ENCODE measurements at regions of chr1 and their contacts with region 1.

Region 1: GRCh38 chr1:203216274-203217138 is 13.0 kb downstream of the CHIT1 start:
- DNase-seq: peak; percentile 77
- CTCF ChIP-seq: peak; percentile 83

Region 2: GRCh38 chr1:203065191-203065590 is 151.3 kb before region 1 on chr1:
- CTCF ChIA-PET with region 1: interaction called, 11 read pairs
- POLR2A ChIA-PET with region 1: no interaction called
- DNase-seq: no peak
- CTCF ChIP-seq: no peak

Region 3: DNA sequence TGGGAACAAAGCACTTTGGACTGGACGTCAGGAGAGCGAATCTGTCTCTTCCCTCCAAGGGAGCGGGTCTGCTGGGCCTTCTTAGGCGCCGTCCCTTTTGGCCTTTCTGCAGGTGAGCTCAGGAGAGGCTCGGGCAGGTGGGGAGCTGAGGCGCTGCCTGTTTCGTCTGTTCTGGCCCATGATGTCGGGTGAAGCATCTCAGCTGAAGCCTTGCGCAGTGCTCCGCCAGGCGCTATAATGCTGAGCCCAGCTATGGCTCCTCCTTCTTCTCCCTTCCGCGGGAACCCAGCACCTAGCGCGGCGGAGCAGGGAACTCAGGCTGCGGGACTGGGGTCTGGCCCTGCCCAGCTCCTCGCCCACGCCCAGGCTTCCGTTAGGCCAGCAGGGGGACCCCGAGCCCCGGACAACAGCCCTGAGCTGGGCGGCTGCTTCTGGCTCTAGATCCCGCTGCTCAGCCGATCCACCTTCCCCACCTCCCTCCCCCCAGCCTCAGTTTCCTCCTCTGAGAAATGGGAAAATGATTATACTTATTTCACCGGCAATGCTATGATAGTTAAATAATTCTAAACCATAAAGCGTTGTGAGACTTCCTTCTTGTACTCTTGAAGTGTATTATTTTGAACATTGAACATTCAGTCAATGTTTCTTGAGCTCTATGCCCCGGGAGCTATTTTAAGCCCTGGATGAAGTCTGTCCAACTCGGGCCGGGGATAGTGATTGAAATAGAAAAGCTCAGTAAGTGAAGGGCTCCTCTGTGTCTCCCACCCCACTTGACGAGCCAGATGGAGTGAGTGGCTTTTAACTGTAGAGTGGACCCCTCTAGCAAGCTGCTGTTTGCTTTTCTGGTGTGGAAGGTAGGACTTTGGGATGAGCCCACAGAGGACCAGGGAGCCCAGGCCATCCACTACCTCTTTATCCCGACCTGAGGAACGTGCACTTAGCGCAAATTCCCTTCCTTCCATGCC is 98.6 kb before region 1 on chr1:
- CTCF ChIA-PET with region 1: interaction called, 18 read pairs
- POLR2A ChIA-PET with region 1: no interaction called
- DNase-seq: peak; percentile 83
- CTCF ChIP-seq: peak; percentile 61

Region 4: GRCh38 chr1:203166566-203166940 is 50.0 kb before region 1 on chr1:
- CTCF ChIA-PET with region 1: interaction called, 18 read pairs
- POLR2A ChIA-PET with region 1: no interaction called
- DNase-seq: peak; percentile 59
- CTCF ChIP-seq: peak; percentile 34

Region 5: DNA sequence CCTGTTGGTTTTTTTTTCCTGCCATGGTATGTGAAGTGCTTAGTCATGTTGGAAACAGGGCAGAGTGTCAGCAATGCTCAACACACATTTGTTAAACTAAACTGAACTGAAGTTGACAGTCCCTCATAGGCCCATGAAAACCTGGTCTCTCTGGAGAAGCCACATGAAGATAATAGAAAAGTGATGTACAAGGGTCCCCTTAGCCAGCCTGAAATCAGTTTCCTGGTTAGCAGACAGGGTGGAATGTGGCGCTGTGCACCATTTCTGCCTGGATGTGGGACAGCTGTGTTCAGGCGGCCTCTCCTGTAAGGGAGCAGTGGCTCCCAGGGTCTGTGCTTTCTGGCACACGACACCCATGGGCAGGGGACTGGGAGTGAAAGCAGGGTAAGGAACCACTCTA is 20.1 kb before region 1 on chr1:
- CTCF ChIA-PET with region 1: interaction called, 19 read pairs
- POLR2A ChIA-PET with region 1: no interaction called
- DNase-seq: no peak
- CTCF ChIP-seq: no peak

Region 6: GRCh38 chr1:203229471-203230135 is 13.1 kb after region 1 on chr1 and contains the start of gene CHIT1:
- CTCF ChIA-PET with region 1: interaction called, 41 read pairs
- POLR2A ChIA-PET with region 1: no interaction called
- DNase-seq: peak; percentile 9
- CTCF ChIP-seq: no peak